ENCODE measurements at regions of chr10 and their contacts with region 1.

Region 1: GRCh38 chr10:84537447-84537931 is 209.1 kb downstream of the CCSER2 start:
- DNase-seq: peak; percentile 16
- H3K4me3 Mint-ChIP-seq: no peak overlapping the region
- H3K27ac Mint-ChIP-seq: no peak overlapping the region
- H3K4me1 Mint-ChIP-seq: peaks cover 35% of the 10 kb centered on the region
- H3K27me3 Mint-ChIP-seq: peaks cover 5% of the 10 kb centered on the region

Region 2: GRCh38 chr10:84328418-84329195 is 208.9 kb before region 1 on chr10 and contains the start of gene CCSER2:
- intact Hi-C with region 1: loop called (anchors 1 kb)
- DNase-seq: peak; percentile 88
- H3K4me3 Mint-ChIP-seq: peak within 1 kb of the TSS; percentile 95
- H3K27ac Mint-ChIP-seq: peak within 1 kb of the TSS; percentile 99
- H3K4me1 Mint-ChIP-seq: peaks cover 39% of the 10 kb centered on the region
- H3K27me3 Mint-ChIP-seq: no peaks in the 10 kb centered on the region
- total RNA-seq, gene CCSER2: 52.3 and 53.6 TPM in 2 replicates

Region 3: DNA sequence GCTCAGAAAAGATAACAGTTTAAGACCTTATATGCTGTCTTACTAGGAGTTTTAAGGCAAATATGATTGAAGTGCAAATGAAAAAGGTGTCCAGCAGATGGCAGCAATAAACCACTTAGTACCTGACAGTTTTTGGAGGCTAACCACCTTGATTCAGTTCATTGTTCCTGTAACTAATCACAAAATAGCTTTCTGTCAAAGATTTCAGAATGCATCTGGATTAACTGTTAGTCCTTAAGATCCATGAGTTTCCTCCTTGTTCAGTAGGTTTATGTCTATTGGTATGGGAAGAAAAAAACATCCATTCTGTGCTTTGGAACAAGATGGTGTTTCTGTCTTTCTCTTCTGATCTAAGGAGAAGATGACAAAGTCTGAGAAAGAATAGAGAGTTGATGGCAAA is 162.5 kb before region 1 on chr10:
- intact Hi-C with region 1: loop called (anchors 1 kb)
- DNase-seq: peak; percentile 22
- H3K4me3 Mint-ChIP-seq: no peak overlapping the region
- H3K27ac Mint-ChIP-seq: peak overlapping the region; percentile 12
- H3K4me1 Mint-ChIP-seq: peaks cover 30% of the 10 kb centered on the region
- H3K27me3 Mint-ChIP-seq: no peaks in the 10 kb centered on the region

Region 4: DNA sequence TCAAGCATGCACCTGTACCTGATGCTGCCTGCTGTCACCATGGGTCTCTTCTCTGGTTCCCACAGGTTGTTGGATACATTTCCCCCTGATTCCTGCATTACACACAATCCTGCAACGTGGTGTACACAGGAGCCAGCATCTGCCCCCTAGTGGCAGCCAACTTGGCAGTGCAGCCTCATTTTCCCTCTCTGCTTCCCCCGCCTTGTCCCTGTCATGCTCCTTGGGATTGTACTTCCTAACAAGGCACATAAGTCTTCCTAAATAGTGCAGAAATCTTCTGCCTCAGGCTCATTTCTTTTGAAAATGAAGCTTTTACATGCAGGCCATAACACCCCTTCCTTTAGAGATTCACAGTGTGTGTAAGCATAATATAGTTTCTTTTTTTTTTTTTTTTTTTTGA is 178.4 kb after region 1 on chr10:
- intact Hi-C with region 1: loop called (anchors 1 kb)
- DNase-seq: no peak
- H3K4me3 Mint-ChIP-seq: no peak overlapping the region
- H3K27ac Mint-ChIP-seq: no peak overlapping the region
- H3K4me1 Mint-ChIP-seq: no peaks in the 10 kb centered on the region
- H3K27me3 Mint-ChIP-seq: peaks cover under 1% of the 10 kb centered on the region